A673 (cell line): ENCODE measurements at regions of chr3 and their contacts with region 1.

Region 1: DNA sequence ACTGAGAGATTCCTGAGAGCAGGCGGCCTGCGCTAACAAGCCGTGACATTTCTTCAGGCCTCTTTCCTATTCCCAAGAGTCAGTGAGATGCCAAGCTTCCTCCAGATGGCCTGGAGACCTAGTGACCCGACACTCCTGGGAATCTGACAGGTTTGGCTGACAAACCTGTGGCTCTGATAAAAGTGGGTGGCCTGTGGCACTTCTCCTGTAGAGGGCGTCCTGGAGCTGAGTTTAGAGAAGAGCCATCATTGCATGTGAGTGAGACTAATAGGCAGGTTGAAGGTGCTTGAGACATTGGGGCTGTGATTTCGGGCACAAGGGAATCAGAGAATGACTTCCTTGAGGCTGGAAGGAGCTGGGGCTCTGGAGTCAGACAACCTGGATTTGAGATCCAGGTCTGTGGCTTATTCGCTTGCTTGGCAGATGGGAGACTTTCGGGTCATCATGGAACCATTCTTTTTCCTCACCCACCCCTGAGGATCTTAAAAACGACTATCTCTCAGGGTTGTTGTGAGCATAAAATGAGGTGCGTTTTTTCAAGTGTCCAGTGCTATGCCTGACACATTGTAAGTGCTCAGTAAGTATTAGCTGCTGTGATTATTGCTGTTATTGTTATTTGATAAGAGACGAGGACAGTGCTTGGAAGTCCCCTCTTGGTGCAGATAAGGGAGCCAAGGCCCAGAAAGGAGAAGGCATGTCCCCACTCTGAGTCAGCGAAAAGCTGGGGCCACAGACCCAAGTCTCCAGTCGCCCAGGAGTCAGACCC is 77.2 kb downstream of the SCN10A start:
- DNase-seq: peak; percentile 23
- H3K4me3 ChIP-seq: no peak overlapping the region
- H3K27ac ChIP-seq: no peak overlapping the region
- H3K4me1 ChIP-seq: no peaks in the 10 kb centered on the region
- H3K27me3 ChIP-seq: peaks cover 12% of the 10 kb centered on the region
- CTCF ChIP-seq: peak; percentile 66

Region 2: DNA sequence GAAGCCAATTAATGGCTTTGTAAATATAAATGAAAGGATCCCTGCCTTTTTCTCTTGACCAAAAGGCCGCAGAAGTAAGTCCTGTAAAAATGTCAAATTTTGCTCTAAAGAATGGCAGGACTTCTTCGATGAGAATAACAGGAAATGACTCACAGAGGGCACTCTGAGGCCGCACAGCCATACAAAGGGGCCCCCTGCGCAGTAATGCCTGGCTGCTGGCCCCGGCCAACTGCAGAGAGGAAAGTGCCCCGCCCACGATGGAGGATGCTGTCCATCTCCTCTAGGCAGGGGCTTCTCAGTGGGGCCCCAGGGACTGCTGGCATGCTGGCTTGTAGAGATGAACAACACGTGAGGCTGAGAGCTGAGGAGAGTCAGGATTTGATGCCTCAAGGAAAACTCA is 95.3 kb after region 1 on chr3:
- CTCF ChIA-PET with region 1: no interaction called
- POLR2A ChIA-PET with region 1: no interaction called
- intact Hi-C with region 1: loop called (anchors 10 kb)
- DNase-seq: peak; percentile 77
- H3K4me3 ChIP-seq: no peak overlapping the region
- H3K27ac ChIP-seq: no peak overlapping the region
- H3K4me1 ChIP-seq: no peaks in the 10 kb centered on the region
- H3K27me3 ChIP-seq: peaks cover 8% of the 10 kb centered on the region
- CTCF ChIP-seq: no peak

Region 3: GRCh38 chr3:39000008-39000450 is 261.2 kb after region 1 on chr3:
- CTCF ChIA-PET with region 1: no interaction called
- POLR2A ChIA-PET with region 1: no interaction called
- intact Hi-C with region 1: loop called (anchors 10 kb)
- DNase-seq: peak; percentile 59
- H3K4me3 ChIP-seq: no peak overlapping the region
- H3K27ac ChIP-seq: no peak overlapping the region
- H3K4me1 ChIP-seq: no peaks in the 10 kb centered on the region
- H3K27me3 ChIP-seq: no peaks in the 10 kb centered on the region
- CTCF ChIP-seq: peak; percentile 66

Region 4: GRCh38 chr3:39260957-39261356 is 522.1 kb after region 1 on chr3:
- CTCF ChIA-PET with region 1: no interaction called
- POLR2A ChIA-PET with region 1: no interaction called
- intact Hi-C with region 1: no loop called
- DNase-seq: peak; percentile 74
- H3K4me3 ChIP-seq: no peak overlapping the region
- H3K27ac ChIP-seq: no peak overlapping the region
- H3K4me1 ChIP-seq: no peaks in the 10 kb centered on the region
- H3K27me3 ChIP-seq: peaks cover 4% of the 10 kb centered on the region
- CTCF ChIP-seq: no peak; the same call in 1 of the 2 replicates

Region 5: DNA sequence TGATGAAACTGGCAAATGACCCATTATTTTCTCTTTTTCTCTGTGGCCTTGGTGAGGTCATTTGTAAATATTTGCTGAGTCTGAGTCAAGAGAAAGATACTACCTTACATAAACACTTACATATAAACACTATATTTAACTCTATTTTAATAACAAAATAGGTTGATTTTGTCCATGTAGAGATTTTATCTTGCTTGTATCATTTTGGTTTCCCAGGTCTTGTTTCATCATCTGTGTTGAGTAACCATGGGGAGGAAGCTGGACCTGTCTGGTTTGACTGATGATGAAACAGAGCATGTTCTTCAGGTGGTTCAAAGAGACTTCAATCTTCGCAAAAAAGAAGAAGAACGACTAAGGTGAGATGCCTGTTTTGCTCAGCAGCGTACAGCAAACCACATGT is 1161.8 kb after region 1 on chr3:
- CTCF ChIA-PET with region 1: no interaction called
- POLR2A ChIA-PET with region 1: no interaction called
- intact Hi-C with region 1: no loop called
- DNase-seq: no peak
- H3K4me3 ChIP-seq: no peak overlapping the region
- H3K27ac ChIP-seq: no peak overlapping the region
- H3K4me1 ChIP-seq: no peaks in the 10 kb centered on the region
- H3K27me3 ChIP-seq: no peaks in the 10 kb centered on the region
- CTCF ChIP-seq: no peak